ENCODE measurements at regions of chr12 and their contacts with region 1.

Region 1: GRCh38 chr12:56461235-56462159 is 6.9 kb upstream of the SPRYD4 start:
- DNase-seq: no peak
- ATAC-seq: no peak
- H3K4me3 Mint-ChIP-seq: no peak overlapping the region
- H3K27ac Mint-ChIP-seq: no peak overlapping the region
- H3K4me1 Mint-ChIP-seq: peaks cover 17% of the 10 kb centered on the region
- H3K27me3 Mint-ChIP-seq: peaks cover 5% of the 10 kb centered on the region
- CTCF ChIP-seq: no peak

Region 2: GRCh38 chr12:56326533-56326932 is 135.0 kb before region 1 on chr12:
- CTCF ChIA-PET with region 1: no interaction called
- POLR2A ChIA-PET with region 1: no interaction called
- DNase-seq: no peak
- ATAC-seq: no peak
- H3K4me3 Mint-ChIP-seq: no peak overlapping the region
- H3K27ac Mint-ChIP-seq: no peak overlapping the region
- H3K4me1 Mint-ChIP-seq: no peaks in the 10 kb centered on the region
- H3K27me3 Mint-ChIP-seq: no peaks in the 10 kb centered on the region
- CTCF ChIP-seq: no peak

Region 3: GRCh38 chr12:56437430-56438176 is 23.9 kb before region 1 on chr12:
- CTCF ChIA-PET with region 1: interaction called, 20 read pairs
- POLR2A ChIA-PET with region 1: interaction called, 6 read pairs
- DNase-seq: no peak
- ATAC-seq: no peak
- H3K4me3 Mint-ChIP-seq: no peak overlapping the region
- H3K27ac Mint-ChIP-seq: peak overlapping the region; percentile 54
- H3K4me1 Mint-ChIP-seq: peaks cover 14% of the 10 kb centered on the region
- H3K27me3 Mint-ChIP-seq: no peaks in the 10 kb centered on the region
- CTCF ChIP-seq: no peak

Region 4: DNA sequence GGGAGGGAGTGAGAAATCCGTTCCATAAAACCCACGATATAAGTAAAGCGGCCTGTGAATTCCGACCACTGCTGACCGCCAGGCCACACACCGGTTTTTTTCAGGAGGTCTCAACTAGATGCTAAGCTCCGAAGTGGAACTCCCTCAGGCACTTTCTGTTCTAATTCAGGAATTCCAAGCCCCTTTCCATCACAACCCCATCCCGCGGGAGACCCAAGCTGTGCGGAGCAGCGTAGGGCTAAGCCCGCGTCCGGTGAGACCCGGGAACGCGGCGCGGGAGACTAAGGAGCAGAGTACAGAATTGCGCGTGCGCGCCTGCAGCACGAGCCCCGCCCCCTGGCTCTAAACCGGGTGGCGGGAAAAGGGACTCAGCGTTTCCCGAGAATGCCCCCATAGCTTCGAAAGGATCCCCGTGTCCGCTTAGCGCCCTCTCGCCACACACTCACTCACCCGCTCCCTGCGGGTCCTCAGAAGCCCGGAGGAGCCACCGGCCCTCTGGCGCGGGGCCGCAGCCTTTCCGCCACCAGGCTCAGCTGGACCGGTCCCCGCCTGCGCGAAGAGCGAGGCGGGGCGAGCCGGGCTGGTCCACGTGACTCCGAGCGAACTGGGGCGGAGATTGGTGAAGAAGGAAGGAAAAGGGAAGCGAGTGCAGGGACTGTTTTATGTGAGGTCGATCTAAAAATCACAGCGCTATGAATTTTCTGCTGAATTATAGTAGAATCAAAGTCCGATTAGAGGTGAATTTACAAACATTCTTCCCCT is 12.5 kb before region 1 on chr12 and contains the start of gene TIMELESS:
- CTCF ChIA-PET with region 1: interaction called, 35 read pairs
- POLR2A ChIA-PET with region 1: interaction called, 15 read pairs
- DNase-seq: peak; percentile 88
- ATAC-seq: peak; percentile 92
- H3K4me3 Mint-ChIP-seq: peak within 1 kb of the TSS; percentile 82
- H3K27ac Mint-ChIP-seq: peak within 1 kb of the TSS; percentile 97
- H3K4me1 Mint-ChIP-seq: peaks cover 41% of the 10 kb centered on the region
- H3K27me3 Mint-ChIP-seq: peaks cover 5% of the 10 kb centered on the region
- CTCF ChIP-seq: no peak
- total RNA-seq, gene TIMELESS: 60.9 to 67.1 TPM (median 64.9 TPM) in 3 replicates

Region 5: GRCh38 chr12:56551070-56551469 is 89.6 kb after region 1 on chr12:
- CTCF ChIA-PET with region 1: no interaction called
- POLR2A ChIA-PET with region 1: no interaction called
- DNase-seq: no peak
- ATAC-seq: no peak
- H3K4me3 Mint-ChIP-seq: no peak overlapping the region
- H3K27ac Mint-ChIP-seq: no peak overlapping the region
- H3K4me1 Mint-ChIP-seq: no peaks in the 10 kb centered on the region
- H3K27me3 Mint-ChIP-seq: no peaks in the 10 kb centered on the region
- CTCF ChIP-seq: no peak

Region 6: GRCh38 chr12:56991319-56992246 is 530.1 kb after region 1 on chr12:
- CTCF ChIA-PET with region 1: no interaction called
- POLR2A ChIA-PET with region 1: no interaction called
- DNase-seq: no peak
- ATAC-seq: no peak
- H3K4me3 Mint-ChIP-seq: no peak overlapping the region
- H3K27ac Mint-ChIP-seq: no peak overlapping the region
- H3K4me1 Mint-ChIP-seq: peaks cover 23% of the 10 kb centered on the region
- H3K27me3 Mint-ChIP-seq: no peaks in the 10 kb centered on the region
- CTCF ChIP-seq: no peak

Measured in WTC11 (cell line).